Mucosa of descending colon (tissue), 3 donors: ENCODE measurements at regions of chr18 and their contacts with region 1.

Region 1: DNA sequence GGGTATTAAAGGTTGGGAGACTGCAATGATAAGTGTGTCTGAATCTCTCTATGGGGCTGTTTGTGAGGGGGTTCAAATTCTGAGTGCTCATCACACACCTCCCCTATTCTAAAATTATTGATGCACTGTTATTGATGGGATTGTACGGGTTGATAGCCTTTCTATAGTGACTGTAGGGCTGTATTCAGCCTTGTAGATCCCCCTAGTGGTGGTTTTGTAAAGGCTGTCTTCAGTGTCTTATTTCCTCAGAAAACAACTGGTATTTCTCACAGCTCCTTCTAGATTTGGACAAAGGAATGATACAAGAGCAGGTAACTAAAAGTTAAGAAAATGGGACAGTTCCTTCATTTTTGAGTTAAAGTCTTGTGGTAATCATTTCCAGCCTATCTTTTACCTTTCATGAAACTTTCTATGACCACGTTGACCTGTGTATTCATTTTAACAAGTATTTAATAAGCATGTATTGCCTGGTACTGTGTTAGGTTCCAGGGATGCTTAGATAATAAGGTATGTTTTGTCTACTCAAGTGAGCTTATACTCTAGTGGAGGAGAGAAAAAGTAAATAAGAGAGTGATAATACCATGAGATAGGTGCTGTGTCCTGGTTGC is 21.2 kb downstream of the SMAD4 start:
- DNase-seq: peak in 1 of 3 donors; percentile 36
- ATAC-seq: peak; percentile 85
- H3K4me3 ChIP-seq: no peak overlapping the region
- H3K4me1 ChIP-seq: no peaks in the 10 kb centered on the region
- CTCF ChIP-seq: peak; percentile 57

Region 2: DNA sequence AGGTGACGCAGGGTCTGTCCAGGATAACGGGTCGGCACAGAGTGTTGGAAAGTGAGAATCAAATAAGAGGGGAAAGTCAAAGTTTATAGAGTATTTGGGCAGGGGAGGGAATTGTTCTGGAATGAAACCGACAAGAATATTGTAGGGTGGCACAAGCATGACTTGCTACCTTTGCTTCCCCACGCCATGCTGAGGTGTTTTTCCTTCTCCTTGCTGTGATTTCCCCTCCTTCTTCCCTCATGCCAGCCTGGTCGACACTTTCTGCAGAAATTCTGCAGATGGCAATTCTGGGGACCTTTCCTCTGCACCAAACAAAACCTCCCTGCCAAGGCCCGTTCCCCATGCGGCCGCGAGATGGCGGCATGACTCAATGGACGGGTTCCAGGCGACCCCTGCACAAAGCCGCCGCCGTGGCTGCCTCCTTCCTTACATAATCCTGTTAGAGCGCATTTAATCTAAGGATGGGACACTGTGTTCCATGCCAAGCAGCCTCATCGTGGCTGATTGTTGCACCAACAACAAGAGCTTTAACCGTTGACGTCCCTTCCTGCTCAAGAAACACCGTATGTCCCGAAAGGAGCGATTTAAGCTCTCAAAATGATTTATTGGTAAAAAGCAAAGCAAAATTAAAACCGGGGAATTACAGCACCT is 231.4 kb before region 1 on chr18 and contains the start of gene MRO:
- intact Hi-C with region 1: loop called (anchors 5 kb)
- DNase-seq: peak; percentile 88 to 91 (median 90)
- ATAC-seq: peak; percentile 98
- H3K4me3 ChIP-seq: no peak within 1 kb of the TSS
- H3K4me1 ChIP-seq: peaks cover 16% of the 10 kb centered on the region
- CTCF ChIP-seq: peak; percentile 88
- total RNA-seq, gene MRO: 0.23 to 0.48 (median 0.28) TPM

Region 3: DNA sequence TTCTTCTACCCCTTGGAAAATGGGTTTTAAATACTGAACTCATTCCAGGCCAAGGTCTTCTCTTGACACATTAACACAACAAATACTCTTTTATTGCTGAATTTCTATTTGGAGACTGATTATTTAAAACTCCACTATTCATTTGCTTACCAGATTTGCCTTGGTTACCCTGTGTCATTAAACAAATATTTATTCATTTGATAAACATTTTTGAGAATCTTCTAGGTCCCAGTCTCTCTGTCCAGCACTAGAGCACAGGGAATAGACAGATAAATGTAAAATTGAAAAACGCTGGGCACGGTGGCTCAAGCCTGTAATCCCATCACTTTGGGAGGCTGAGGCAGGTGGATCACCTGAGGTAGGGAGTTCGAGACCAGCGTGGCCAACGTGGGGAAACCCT is 221.6 kb before region 1 on chr18:
- intact Hi-C with region 1: loop called in 1 of 2 experiments (anchors 5 kb)
- DNase-seq: no peak
- ATAC-seq: no peak
- H3K4me3 ChIP-seq: no peak overlapping the region
- H3K4me1 ChIP-seq: peaks cover 10% of the 10 kb centered on the region
- CTCF ChIP-seq: no peak

Region 4: DNA sequence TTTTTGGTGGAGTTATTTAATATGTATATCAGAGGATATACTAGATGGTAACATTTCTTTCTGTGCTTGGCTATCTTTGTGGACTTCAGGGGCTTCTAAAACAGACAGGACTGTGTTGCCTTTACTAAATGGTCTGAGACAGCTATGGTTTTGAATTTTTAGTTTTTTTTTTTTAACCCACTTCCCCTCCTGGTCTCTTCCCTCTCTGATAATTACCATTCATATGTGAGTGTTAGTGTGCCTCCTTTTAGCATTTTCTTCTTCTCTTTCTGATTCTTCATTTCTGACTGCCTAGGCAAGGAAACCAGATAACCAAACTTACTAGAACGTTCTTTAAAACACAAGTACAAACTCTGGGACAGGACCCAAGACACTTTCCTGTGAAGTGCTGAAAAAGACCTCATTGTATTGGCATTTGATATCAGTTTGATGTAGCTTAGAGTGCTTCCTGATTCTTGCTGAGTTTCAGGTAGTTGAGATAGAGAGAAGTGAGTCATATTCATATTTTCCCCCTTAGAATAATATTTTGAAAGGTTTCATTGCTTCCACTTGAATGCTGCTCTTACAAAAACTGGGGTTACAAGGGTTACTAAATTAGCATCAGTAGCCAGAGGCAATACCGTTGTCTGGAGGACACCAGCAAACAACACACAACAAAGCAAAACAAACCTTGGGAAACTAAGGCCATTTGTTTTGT is 31.5 kb after region 1 on chr18:
- intact Hi-C with region 1: no loop called
- DNase-seq: no peak
- ATAC-seq: no peak
- H3K4me3 ChIP-seq: no peak overlapping the region
- H3K4me1 ChIP-seq: no peaks in the 10 kb centered on the region
- CTCF ChIP-seq: no peak